GM12878 (cell line): ENCODE measurements at regions of chr22 and their contacts with region 1.

Region 1: DNA sequence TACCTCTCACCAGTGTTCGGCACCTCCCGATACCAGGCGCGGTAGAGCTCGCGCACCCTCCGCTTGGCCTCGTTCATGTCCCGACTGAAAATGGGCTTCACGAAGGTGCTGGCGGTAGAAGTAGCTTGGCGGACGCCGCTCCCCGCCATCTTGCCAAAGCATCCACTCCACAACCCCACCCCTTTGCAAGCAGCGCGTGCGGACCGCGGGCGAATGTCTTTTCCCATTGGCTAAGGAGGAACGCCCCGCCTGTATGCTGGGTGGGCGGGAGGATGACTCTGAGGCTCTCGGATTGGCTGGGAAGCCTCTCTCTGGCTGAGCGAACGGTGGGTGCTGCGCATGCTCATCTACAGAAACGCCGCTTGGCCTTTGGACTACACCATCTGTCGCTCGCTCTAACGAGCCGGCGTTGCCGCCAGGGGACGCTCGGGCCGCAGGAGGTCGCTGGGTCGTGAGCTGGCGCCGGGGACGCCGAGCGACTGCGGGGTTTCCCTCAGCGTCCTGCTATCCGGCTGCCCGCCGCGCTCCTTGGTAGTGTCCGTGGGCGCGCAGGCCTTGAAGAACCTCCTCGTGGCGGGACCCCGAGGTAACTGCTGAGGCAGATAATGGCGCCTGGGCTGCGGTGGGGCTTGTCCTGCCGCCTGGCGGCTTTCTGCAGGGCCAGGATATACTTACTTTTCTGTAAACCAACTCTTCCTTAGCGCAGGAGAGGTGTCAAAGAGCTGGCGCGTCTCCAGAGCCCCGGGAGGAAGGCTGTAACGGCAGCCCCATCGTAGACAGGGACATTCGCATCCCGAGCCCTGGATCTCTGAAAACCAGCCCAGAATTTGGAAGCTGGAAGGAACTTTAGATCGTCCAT is at the start of gene NDUFA6:
- DNase-seq: peak; percentile 99
- ATAC-seq: peak; percentile 95
- H3K4me3 ChIP-seq: peak within 1 kb of the TSS; percentile 82
- H3K27ac ChIP-seq: peak within 1 kb of the TSS; percentile 87
- H3K4me1 ChIP-seq: 0 out of 2 replicates have a peak, but pooled peaks cover 3% of the 10 kb centered on the region
- H3K27me3 ChIP-seq: no peaks in the 10 kb centered on the region
- CTCF ChIP-seq: peak; percentile 95 to 99 (median 96); a peak in 5 of 6 replicates
- EP300 ChIP-seq: no peak
- POLR2A ChIP-seq: peak; percentile 98
- RAD21 ChIP-seq: peak; percentile 84
- polyA plus RNA-seq, gene NDUFA6: 473 to 511 TPM

Region 2: GRCh38 chr22:41951898-41952474 is 138.8 kb before region 1 on chr22 and contains the start of gene SMIM45:
- CTCF ChIA-PET with region 1: interaction called, 8 read pairs
- POLR2A ChIA-PET with region 1: interaction called, 3 read pairs
- RAD21 ChIA-PET with region 1: interaction called, 11 read pairs
- SMC1A ChIA-PET with region 1: interaction called, 4 read pairs
- in situ Hi-C with region 1: no loop called
- intact Hi-C with region 1: no loop called
- DNase-seq: no peak
- ATAC-seq: peak; percentile 35
- H3K4me3 ChIP-seq: no peak within 1 kb of the TSS
- H3K27ac ChIP-seq: no peak within 1 kb of the TSS
- H3K4me1 ChIP-seq: peaks cover 41% of the 10 kb centered on the region
- H3K27me3 ChIP-seq: no peaks in the 10 kb centered on the region
- CTCF ChIP-seq: peak in 1 of 3 experiments; percentile 19; a peak in 2 of 6 replicates
- EP300 ChIP-seq: no peak
- POLR2A ChIP-seq: no peak
- RAD21 ChIP-seq: no peak

Region 3: DNA sequence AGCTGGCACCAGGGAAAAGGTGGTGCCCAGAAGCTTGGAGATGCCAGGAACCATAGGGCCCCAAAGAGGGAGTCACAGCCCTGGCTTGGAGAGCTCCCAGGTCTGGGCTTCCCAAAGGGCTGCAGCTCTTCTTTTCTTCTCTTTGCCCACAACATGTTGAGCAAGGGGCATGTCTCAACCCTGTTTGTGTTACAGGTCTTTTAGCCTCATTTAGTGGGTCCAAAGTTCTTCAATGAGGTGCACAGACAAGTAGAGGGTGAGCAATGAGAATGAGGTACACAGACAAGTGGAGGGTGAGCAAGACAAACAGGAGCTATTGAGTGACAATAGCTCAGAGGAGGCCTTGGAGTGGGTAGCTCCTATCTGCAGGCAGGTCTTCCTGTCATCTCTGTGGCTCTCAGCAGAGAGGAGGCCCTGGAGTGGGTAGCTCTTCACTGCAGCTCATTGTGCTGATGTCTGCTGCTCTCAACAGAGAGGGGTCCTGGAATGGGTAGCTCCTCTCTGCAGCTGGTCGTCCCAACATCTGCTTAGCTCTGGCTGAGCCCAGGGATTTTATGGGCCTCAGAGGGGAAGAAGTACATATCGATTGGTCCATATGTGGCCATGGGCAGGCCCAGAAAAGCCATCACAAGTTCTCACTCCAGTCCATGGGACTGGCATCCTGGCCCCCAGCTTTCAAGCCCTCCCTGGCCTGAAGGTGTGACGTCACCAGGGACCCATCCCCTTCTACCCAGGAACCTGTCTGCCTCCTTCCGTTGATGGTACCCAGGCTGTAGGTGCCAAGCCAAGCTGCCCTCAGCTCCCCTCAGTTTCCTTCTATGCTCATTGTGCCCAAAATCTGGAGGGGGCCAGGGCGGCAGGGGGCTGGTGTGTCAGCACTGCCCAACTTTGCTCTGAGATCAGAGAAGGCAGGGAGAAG is 57.3 kb before region 1 on chr22:
- CTCF ChIA-PET with region 1: interaction called, 3 read pairs
- POLR2A ChIA-PET with region 1: interaction called, 3 read pairs
- RAD21 ChIA-PET with region 1: interaction called, 11 read pairs
- SMC1A ChIA-PET with region 1: interaction called, 4 read pairs
- in situ Hi-C with region 1: no loop called
- intact Hi-C with region 1: no loop called
- DNase-seq: no peak
- ATAC-seq: no peak
- H3K4me3 ChIP-seq: no peak overlapping the region
- H3K27ac ChIP-seq: no peak overlapping the region
- H3K4me1 ChIP-seq: peaks cover 22% of the 10 kb centered on the region
- H3K27me3 ChIP-seq: no peaks in the 10 kb centered on the region
- CTCF ChIP-seq: no peak
- EP300 ChIP-seq: no peak
- POLR2A ChIP-seq: no peak
- RAD21 ChIP-seq: no peak

Region 4: DNA sequence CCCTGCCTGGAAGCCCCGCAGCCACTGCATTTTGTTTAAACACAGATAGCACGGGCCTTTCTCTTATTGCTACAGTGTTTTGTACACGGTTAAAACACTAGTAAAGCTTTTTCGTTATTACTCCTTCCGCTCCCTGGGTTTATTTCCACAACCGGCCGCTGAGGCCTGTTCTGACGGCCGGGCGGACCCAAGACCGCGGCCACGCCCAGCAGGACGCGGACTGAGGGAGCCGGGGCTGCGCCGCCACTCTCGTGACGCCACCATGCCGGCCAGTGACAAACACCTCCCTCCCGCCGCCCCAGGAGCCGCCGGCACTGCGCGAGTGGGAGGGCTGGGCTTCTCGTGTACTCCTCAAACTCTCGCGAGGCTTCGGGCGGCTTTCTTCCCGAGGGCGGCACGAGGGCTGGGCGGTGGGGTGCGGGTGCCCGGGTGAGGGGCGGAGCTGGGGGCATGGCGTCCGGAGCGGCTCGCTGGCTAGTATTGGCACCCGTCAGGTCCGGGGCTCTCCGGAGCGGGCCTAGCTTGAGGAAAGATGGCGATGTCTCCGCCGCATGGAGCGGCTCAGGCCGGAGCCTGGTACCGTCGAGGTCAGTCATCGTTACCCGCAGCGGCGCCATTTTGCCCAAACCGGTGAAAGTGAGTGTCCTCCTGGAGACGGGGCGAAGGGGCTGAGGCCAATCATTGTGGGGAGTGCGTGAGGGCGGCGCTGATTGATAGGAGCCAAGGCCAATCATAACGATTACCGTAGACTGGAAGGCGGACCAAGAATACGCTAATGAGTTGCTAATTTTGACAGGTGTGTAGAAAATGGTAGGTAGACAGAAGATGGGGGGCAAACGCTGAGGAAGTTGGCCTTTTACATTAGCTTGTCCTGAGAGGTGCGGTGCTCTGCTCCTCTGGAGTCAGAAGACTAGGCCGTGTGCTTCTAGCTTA is 11.2 kb before region 1 on chr22 and contains the start of gene SMDT1:
- CTCF ChIA-PET with region 1: interaction called, 24 read pairs
- POLR2A ChIA-PET with region 1: interaction called, 47 read pairs
- RAD21 ChIA-PET with region 1: interaction called, 32 read pairs
- SMC1A ChIA-PET with region 1: interaction called, 29 read pairs
- in situ Hi-C with region 1: no loop called
- intact Hi-C with region 1: no loop called
- DNase-seq: peak; percentile 99
- ATAC-seq: peak; percentile 95
- H3K4me3 ChIP-seq: peak within 1 kb of the TSS; percentile 81
- H3K27ac ChIP-seq: peak within 1 kb of the TSS; percentile 90
- H3K4me1 ChIP-seq: peaks cover 12% of the 10 kb centered on the region
- H3K27me3 ChIP-seq: no peaks in the 10 kb centered on the region
- CTCF ChIP-seq: no peak
- EP300 ChIP-seq: no peak
- POLR2A ChIP-seq: peak; percentile 94
- RAD21 ChIP-seq: no peak
- polyA plus RNA-seq, gene SMDT1: 25.5 to 63.1 TPM

Region 5: GRCh38 chr22:42114721-42115120 is 23.9 kb after region 1 on chr22:
- CTCF ChIA-PET with region 1: interaction called, 36 read pairs
- POLR2A ChIA-PET with region 1: no interaction called
- RAD21 ChIA-PET with region 1: interaction called, 25 read pairs
- SMC1A ChIA-PET with region 1: interaction called, 20 read pairs
- in situ Hi-C with region 1: no loop called
- intact Hi-C with region 1: no loop called
- DNase-seq: no peak
- ATAC-seq: peak; percentile 19; the same call in 1 of the 3 replicates
- H3K4me3 ChIP-seq: no peak overlapping the region
- H3K27ac ChIP-seq: no peak overlapping the region
- H3K4me1 ChIP-seq: no peaks in the 10 kb centered on the region
- H3K27me3 ChIP-seq: no peaks in the 10 kb centered on the region
- CTCF ChIP-seq: peak in 2 of 3 experiments; percentile 20 to 34; a peak in 3 of 6 replicates
- EP300 ChIP-seq: no peak
- POLR2A ChIP-seq: no peak
- RAD21 ChIP-seq: peak; percentile 17; the same call in 1 of the 2 replicates

Region 6: DNA sequence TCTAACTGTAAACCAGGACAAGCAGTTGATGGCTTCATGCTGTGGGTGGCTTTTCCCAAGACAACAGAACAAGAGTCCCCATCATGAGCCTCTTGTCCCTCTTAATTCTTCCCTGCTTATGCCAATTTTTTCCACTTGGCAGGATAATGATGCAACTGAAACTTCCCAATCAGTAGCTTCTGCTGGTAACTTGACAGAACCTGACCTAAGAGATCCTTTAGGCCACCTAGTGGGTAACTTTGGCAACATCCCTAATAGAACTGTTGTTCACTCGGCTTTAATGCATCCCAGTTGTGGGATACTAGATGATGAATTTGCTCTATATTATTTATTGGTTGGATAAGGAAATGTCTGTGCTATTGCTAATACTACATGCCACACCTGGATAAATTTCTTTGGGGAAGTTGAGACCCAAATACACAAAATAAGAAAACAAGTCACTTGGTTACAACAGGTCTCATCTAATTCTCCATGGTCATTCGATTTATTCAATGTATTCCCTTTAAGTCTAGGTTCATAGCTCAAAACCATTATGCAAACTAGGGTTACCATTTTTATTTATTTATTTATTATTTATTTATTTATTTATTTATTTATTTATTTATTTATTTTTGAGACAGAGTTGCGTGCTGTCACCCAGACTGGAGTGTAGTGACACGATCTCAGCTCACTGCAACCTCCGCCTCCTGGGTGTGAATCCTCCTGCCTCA is 382.8 kb after region 1 on chr22:
- CTCF ChIA-PET with region 1: interaction called, 15 read pairs
- POLR2A ChIA-PET with region 1: no interaction called
- RAD21 ChIA-PET with region 1: interaction called, 5 read pairs
- SMC1A ChIA-PET with region 1: interaction called, 19 read pairs
- in situ Hi-C with region 1: no loop called
- intact Hi-C with region 1: no loop called
- DNase-seq: no peak
- ATAC-seq: peak; percentile 89
- H3K4me3 ChIP-seq: no peak overlapping the region
- H3K27ac ChIP-seq: no peak overlapping the region
- H3K4me1 ChIP-seq: no peaks in the 10 kb centered on the region
- H3K27me3 ChIP-seq: 0 out of 4 replicates have a peak, but pooled peaks cover 1 to 3% of the 10 kb centered on the region in 2 experiments
- CTCF ChIP-seq: peak; percentile 67 to 73 (median 70)
- EP300 ChIP-seq: no peak
- POLR2A ChIP-seq: no peak
- RAD21 ChIP-seq: peak; percentile 68

Region 7: GRCh38 chr22:42614312-42615091 is 523.7 kb after region 1 on chr22 and contains the start of gene POLDIP3:
- CTCF ChIA-PET with region 1: no interaction called
- POLR2A ChIA-PET with region 1: interaction called, 3 read pairs
- RAD21 ChIA-PET with region 1: interaction called, 3 read pairs
- SMC1A ChIA-PET with region 1: no interaction called
- in situ Hi-C with region 1: no loop called
- intact Hi-C with region 1: loop called (anchors 10 kb)
- DNase-seq: peak; percentile 78
- ATAC-seq: peak; percentile 79
- H3K4me3 ChIP-seq: peak within 1 kb of the TSS; percentile 94
- H3K27ac ChIP-seq: peak within 1 kb of the TSS; percentile 100
- H3K4me1 ChIP-seq: peaks cover 17% of the 10 kb centered on the region
- H3K27me3 ChIP-seq: no peaks in the 10 kb centered on the region
- CTCF ChIP-seq: peak; percentile 5 to 38 (median 36); a peak in 4 of 6 replicates
- EP300 ChIP-seq: 0 out of 4 replicates have a peak, but pooled peaks of 1 of the 2 experiments have one; percentile 13
- POLR2A ChIP-seq: peak; percentile 78
- RAD21 ChIP-seq: no peak
- polyA plus RNA-seq, gene POLDIP3: 14.8 to 19.3 TPM